Mammary epithelial cell (primary cell): ENCODE measurements at regions of chr6 and their contacts with region 1.

Region 1: DNA sequence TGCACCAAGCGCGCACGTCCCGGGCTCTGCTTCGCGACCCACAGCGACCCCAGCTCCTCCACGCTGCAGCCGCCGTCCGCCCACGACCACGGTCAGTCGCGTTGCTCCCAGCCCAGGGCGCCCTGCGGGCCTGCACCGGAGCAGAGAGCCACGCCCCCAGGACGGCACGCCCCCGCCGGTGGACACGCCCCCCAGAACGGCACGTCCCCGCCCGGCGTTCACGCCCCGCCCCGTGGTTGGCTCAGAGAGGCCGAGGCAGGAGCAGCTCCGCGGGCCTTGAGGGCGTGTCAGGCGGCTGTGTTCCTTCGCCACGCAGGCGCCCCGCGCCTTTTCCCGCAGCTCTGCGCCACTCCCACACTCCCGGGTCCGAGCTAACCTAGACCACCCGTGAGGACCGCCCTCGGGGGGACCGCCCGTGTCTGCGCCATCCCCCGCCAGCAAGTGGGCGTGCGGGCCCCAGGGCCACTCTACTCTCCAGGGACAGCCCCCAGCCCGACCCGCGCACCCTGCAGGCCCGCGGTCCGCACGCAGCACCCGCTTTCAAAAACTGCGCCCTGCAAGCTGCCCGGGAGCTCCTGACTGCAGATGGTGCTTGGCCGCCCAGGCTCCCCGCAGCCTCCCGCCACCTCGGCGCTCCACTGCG is at the start of gene RNASET2:
- DNase-seq: peak; percentile 85
- H3K4me3 ChIP-seq: peak within 1 kb of the TSS; percentile 75 to 90 (median 81)
- H3K27ac ChIP-seq: no peak within 1 kb of the TSS
- H3K4me1 ChIP-seq: peaks cover 16% of the 10 kb centered on the region
- H3K27me3 ChIP-seq: no peaks in the 10 kb centered on the region
- CTCF ChIP-seq: no peak
- total RNA-seq, gene RNASET2: 17.0 to 18.7 TPM

Region 2: DNA sequence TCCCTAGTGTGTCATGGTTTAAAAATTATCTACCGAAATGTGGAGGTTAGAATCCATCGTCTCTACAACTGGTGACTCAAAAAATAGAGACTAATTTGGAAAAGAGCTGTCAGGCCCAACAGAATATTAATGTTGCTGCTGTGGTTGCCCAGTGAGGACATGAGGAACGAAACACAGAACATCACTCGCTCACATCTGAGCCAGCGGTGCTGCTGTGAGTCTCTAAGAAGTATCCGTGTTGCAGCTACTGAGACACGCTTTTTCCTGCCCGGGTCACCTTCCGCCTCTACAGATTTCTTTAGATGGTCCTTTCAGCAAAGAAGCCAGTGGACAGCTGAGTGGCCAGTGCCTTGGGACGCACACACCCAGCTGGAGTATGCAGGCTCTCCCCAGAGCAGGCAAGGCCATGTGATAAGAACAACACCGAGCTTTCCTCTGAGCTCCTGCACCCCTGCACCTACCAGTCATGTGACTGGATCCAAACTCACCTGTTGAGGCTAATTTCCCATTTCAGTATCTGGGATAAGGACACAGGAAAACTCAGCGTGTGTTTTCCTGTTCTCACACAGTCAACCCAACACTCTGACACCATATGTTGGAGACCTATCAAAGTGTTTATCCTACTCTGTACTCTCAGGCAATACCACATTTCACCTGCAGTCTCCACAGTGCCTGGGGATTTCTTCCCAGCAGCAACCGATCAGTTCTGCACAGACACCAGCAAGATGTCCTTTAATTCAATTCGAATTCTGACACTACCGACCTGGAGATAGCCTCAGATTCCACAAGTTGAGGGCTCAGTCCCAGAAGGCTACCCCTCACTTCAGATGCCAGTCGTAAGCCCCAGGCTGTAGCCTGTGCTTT is 210.5 kb before region 1 on chr6:
- CTCF ChIA-PET with region 1: interaction called, 10 read pairs
- dilution Hi-C with region 1: no loop called
- in situ Hi-C with region 1: no loop called
- intact Hi-C with region 1: no loop called
- DNase-seq: no peak
- H3K4me3 ChIP-seq: no peak overlapping the region
- H3K27ac ChIP-seq: no peak overlapping the region
- H3K4me1 ChIP-seq: no peaks in the 10 kb centered on the region
- H3K27me3 ChIP-seq: no peaks in the 10 kb centered on the region
- CTCF ChIP-seq: no peak

Region 3: DNA sequence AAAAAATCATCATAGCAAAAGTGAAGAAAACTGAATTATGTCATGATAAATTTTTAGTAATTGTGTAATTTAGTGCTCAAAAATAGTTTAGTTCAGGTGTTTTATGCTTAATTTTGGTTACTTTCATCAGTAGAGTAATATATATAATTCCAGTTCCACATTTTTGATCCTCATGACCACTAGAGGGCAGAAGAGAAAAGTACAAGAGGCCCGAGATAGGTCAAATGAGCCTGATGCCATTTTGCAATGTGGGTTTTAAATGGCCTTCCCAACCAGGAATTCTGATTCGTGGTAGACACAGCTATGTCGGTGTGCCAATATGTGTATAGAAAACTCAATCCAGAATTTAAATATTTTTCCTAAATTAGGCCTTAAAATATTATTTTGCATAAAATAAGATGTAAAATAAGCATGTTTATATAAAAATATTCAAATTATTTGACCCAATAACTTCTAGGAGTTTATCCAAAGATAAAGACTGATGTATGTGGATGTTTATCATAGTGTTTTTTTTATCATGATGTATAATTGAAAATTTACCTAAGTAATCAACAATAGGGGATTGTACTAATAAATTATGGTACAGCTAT is 169.8 kb before region 1 on chr6:
- CTCF ChIA-PET with region 1: no interaction called
- dilution Hi-C with region 1: no loop called
- in situ Hi-C with region 1: loop called in 1 of 2 experiments (anchors 25 kb)
- intact Hi-C with region 1: loop called (anchors 1 kb)
- DNase-seq: peak; percentile 38
- H3K4me3 ChIP-seq: no peak overlapping the region
- H3K27ac ChIP-seq: no peak overlapping the region
- H3K4me1 ChIP-seq: no peaks in the 10 kb centered on the region
- H3K27me3 ChIP-seq: no peaks in the 10 kb centered on the region
- CTCF ChIP-seq: peak; percentile 57 to 71

Region 4: GRCh38 chr6:166925141-166925996 is 31.2 kb before region 1 on chr6:
- CTCF ChIA-PET with region 1: no interaction called
- dilution Hi-C with region 1: no loop called
- in situ Hi-C with region 1: no loop called
- intact Hi-C with region 1: no loop called
- DNase-seq: no peak
- H3K4me3 ChIP-seq: no peak overlapping the region
- H3K27ac ChIP-seq: no peak overlapping the region
- H3K4me1 ChIP-seq: no peaks in the 10 kb centered on the region
- H3K27me3 ChIP-seq: peaks cover 2% of the 10 kb centered on the region
- CTCF ChIP-seq: no peak

Region 5: DNA sequence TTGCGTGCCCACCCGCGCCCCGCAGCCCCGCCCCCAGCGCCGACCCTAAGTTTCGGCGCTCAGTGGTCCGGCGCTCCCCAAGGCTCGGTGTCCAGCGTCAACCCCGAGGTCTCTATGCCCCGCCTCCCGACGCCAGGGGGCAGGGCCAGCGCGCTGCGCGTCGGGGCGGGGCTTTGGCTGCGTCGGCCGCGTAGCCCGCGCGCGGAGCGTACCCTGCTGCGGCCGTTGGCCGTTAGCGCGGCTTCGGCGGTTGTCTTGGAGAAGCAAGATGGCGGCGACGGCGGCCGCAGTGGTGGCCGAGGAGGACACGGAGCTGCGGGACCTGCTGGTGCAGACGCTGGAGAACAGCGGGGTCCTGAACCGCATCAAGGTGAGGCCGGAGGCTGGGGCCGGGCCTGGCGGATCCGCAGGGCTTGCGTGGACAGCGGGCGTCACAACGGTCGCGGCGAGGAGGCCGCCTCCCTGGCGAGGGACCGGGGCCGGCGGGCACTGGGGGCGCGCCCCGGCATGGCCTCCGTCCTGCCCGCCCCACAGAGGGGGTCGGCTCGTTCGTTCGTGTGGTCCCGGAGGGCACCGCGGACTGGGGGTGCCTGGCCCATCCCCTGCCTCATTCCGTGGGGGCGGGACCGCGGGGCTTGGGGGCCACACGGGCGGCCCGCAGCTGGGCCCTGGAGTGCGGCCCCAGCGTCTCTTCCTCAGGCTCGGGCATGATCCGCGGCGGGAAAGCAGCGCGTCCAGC is 42.7 kb after region 1 on chr6 and contains the start of gene CEP43:
- CTCF ChIA-PET with region 1: no interaction called
- dilution Hi-C with region 1: no loop called
- in situ Hi-C with region 1: no loop called
- intact Hi-C with region 1: loop called (anchors 2 kb)
- DNase-seq: peak; percentile 94
- H3K4me3 ChIP-seq: peak within 1 kb of the TSS; percentile 88 to 98 (median 91)
- H3K27ac ChIP-seq: peak within 1 kb of the TSS; percentile 76
- H3K4me1 ChIP-seq: peaks cover 14% of the 10 kb centered on the region
- H3K27me3 ChIP-seq: no peaks in the 10 kb centered on the region
- CTCF ChIP-seq: no peak
- total RNA-seq, gene CEP43: 16.3 to 17.3 TPM

Region 6: GRCh38 chr6:167031082-167031709 is 74.6 kb after region 1 on chr6:
- CTCF ChIA-PET with region 1: no interaction called
- dilution Hi-C with region 1: no loop called
- in situ Hi-C with region 1: no loop called
- intact Hi-C with region 1: no loop called
- DNase-seq: peak; percentile 37
- H3K4me3 ChIP-seq: no peak overlapping the region
- H3K27ac ChIP-seq: no peak overlapping the region
- H3K4me1 ChIP-seq: no peaks in the 10 kb centered on the region
- H3K27me3 ChIP-seq: no peaks in the 10 kb centered on the region
- CTCF ChIP-seq: no peak